Ascending aorta (tissue), 2 donors: ENCODE measurements at regions of chr12 and their contacts with region 1.

Region 1: DNA sequence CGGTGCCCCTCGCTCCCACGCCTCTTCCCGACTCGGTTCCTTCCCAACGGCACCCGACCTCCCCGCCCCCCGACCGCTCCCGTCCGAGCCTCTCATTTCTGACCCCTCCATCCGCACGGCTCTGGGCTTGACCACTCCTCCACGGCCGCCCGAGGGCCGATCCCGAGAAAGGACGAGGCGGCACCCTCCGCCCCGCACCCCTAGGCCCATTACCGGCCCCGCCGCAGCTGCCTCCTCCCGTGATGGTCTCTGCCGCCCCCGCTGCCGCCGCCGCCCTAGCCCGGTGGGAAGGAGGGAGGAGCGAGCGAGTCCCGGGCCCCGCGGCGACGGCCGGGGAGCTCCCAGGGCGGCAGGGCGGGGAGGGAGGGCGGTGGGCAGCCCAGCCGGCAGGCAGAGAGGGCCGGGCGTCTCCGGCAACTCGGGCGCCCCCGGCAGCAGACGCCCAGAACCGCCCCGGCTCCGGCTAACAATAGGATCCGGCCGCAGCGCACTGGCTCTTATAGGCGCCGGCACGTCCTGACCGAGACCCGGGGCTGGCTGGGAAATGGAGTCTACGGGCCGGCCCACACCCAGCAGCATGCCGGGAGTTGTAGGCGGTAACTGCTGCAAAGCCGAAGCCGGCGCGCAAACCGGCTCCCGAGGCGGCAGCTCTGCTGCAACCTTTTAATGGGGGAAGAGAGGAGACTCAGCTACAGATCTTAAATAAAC is at the start of gene CSRNP2:
- DNase-seq: peak; percentile 90 to 98
- H3K4me3 ChIP-seq: peak within 1 kb of the TSS; percentile 91 to 99
- H3K27ac ChIP-seq: peak within 1 kb of the TSS; percentile 95 to 99
- H3K4me1 ChIP-seq: peaks cover 5 to 13% of the 10 kb centered on the region in 2 donors
- H3K27me3 ChIP-seq: no peaks in the 10 kb centered on the region
- CTCF ChIP-seq: no peak
- total RNA-seq, gene CSRNP2: 13.6 TPM

Region 2: DNA sequence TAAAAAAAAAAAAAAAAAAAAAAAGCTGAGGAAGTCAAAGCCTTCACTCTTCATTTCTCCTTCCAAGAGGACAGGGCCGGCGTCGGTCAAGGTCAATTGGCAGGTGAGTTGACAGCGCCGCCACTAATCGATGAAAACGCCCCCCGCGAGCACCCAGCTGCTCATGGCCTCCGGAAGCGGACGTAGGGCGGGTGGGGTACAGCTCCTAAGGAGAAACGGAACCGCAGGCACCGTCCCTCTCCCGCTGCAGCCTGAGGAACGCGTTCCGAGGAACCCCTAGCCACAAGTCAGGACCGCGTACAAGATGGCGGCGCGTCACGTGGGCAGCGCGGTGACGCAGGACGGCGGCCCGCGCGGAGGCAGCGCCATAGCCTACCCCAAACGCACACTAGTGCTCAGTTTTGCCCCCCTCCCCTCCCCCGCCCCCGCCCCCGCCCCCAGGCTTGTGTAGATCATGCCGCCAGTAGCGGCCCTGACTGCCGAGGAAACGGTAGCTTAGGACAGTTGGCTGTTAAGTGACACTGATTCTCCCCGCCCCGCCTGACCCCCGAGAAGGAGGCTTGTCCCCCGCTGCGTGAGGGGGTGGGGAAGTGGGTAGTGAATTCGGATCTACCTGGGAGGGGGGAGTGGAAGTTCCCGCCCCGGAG is 319.5 kb before region 1 on chr12 and contains the start of gene ATF1:
- intact Hi-C with region 1: loop called (anchors 2 kb)
- DNase-seq: peak; percentile 73 to 96
- H3K4me3 ChIP-seq: peak within 1 kb of the TSS; percentile 83 to 94
- H3K27ac ChIP-seq: peak within 1 kb of the TSS; percentile 96 to 98
- H3K4me1 ChIP-seq: peaks cover 0 to 15% of the 10 kb centered on the region in 2 donors
- H3K27me3 ChIP-seq: no peaks in the 10 kb centered on the region
- CTCF ChIP-seq: no peak
- total RNA-seq, gene ATF1: 6.8 TPM

Region 3: DNA sequence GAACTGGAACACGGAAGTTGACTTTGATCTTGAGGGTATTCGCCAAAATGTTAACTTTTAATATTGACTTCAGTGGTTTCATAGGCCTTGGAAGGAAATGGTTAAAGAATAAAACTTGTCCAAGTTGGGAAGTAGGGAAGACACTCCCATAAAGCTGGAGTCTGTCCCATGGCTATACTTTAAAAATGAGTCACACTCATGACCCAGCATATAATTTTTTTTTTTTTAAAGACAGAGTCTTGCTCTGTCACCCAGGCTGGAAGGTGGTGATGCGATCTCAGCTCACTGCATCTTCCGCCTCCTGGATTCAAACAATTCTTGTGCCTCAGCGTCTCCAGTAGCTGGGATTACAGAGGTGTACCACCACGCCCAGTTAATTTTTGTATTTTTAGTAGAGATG is 221.0 kb before region 1 on chr12:
- intact Hi-C with region 1: no loop called
- DNase-seq: no peak
- H3K4me3 ChIP-seq: no peak overlapping the region
- H3K27ac ChIP-seq: no peak overlapping the region
- H3K4me1 ChIP-seq: no peaks in the 10 kb centered on the region
- H3K27me3 ChIP-seq: no peaks in the 10 kb centered on the region
- CTCF ChIP-seq: no peak

Region 4: DNA sequence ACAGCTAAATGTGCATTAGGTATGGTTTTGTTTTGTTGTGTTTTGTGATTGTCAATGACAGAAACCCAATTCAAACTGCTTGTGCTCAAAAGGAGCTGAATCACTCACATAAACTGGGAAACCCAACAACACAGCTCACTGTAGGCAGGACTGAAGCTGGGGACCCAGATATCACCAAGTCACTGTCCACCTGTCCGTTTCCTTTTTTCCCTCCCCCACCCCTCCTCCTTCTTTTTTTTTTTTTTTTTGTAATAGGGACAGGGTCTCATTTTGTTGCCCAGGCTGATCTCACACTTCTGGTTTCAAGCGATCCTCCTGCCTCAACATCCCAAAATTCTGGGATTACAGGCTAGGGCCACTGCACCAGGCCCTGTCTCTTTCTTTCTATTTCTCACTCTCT is 50.2 kb before region 1 on chr12:
- intact Hi-C with region 1: no loop called
- DNase-seq: no peak
- H3K4me3 ChIP-seq: no peak overlapping the region
- H3K27ac ChIP-seq: no peak overlapping the region
- H3K4me1 ChIP-seq: no peaks in the 10 kb centered on the region
- H3K27me3 ChIP-seq: no peaks in the 10 kb centered on the region
- CTCF ChIP-seq: no peak

Region 5: DNA sequence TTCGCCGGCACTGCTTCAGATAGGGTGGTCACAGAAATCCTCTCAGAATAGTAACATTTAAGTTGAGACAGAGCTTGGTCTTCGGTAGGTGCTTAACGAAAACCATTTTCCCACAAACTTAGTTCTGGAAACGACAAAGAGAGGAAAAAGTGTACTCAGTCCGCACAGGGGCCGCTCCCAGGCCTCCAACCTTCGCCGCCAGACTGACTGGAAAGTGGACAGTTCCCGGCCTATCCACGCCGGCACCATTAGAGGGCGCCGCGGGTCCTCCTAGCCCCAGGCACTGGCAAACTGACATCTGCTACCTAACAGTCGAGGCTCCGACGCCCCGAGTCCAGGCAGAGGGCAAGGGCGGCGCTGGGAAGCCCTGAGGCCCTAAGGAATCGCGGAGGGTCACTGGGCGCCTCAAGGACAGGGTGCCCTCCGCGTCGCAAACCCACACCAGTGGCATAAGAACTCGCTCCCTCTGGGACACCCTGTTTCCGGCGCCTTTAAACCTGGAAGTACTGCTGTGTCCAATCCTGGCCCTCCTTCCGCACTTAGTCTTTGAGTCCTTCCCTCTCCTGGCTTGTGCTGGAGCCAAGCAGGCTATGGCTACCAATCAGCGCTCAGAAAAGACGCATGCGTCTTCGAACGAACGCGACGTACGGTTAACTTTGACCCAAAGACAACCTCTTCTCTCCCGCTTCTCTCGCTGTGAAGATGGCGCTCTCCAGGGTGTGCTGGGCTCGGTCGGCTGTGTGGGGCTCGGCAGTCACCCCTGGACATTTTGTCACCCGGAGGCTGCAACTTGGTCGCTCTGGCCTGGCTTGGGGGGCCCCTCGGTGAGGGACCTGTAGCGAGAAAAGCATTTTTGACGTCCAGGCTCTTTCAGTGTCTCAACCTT is 35.4 kb before region 1 on chr12 and contains the start of gene LETMD1:
- intact Hi-C with region 1: loop called (anchors 1 kb)
- DNase-seq: peak; percentile 87 to 97
- H3K4me3 ChIP-seq: peak within 1 kb of the TSS; percentile 93 to 95
- H3K27ac ChIP-seq: peak within 1 kb of the TSS; percentile 94 to 95
- H3K4me1 ChIP-seq: peaks cover 8 to 17% of the 10 kb centered on the region in 2 donors
- H3K27me3 ChIP-seq: no peaks in the 10 kb centered on the region
- CTCF ChIP-seq: peak; percentile 85 to 93 (median 91)
- total RNA-seq, gene LETMD1: 8.6 TPM

Region 6: GRCh38 chr12:51172515-51173431 is 89.5 kb after region 1 on chr12 and contains the start of gene TFCP2:
- intact Hi-C with region 1: loop called (anchors 1 kb)
- DNase-seq: peak; percentile 91 to 98
- H3K4me3 ChIP-seq: peak within 1 kb of the TSS; percentile 85 to 94
- H3K27ac ChIP-seq: peak within 1 kb of the TSS; percentile 91 to 100
- H3K4me1 ChIP-seq: peaks cover 6% of the 10 kb centered on the region in 2 donors
- H3K27me3 ChIP-seq: no peaks in the 10 kb centered on the region
- CTCF ChIP-seq: no peak
- total RNA-seq, gene TFCP2: 3.0 TPM

Region 7: DNA sequence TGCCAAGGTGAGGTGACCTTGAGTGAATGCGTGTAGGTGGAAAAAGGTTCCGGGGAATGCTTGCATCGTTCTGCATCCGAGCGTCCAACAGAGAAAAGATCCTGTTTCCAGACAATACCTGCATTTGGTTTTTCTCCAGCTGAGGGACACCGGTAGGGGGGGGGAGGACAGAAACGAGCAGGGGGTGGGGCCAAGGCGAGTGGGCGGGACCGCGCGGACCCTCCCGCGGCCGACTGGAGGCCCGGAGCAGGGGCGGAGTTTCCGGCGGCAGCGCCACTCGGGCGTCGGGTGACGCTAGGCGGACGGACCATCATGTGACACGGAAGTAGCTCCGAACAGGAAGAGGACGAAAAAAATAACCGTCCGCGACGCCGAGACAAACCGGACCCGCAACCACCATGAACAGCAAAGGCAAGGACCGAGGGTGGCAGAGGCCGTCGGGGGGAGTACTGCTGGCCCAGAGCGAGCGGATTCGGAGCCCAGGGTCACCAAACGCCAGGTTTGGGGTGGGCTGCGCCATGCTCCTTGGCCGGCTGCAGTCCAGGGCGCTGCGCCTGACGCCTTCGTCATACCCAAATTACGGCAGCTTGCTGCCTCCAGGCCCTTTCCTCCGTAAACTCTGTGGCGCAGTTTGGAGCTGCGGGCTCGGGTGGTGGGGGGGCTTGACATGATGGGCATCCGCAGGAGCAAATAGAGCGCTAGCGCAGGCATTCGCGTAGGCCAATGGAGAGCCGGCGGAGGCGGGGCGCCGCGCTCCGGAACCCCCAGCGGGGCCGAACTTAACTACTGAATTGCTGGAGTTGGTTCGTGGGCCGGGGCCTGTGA is 155.4 kb after region 1 on chr12 and contains the start of gene DAZAP2:
- intact Hi-C with region 1: loop called (anchors 2 kb)
- DNase-seq: peak; percentile 85 to 97
- H3K4me3 ChIP-seq: peak within 1 kb of the TSS; percentile 74 to 96
- H3K27ac ChIP-seq: peak within 1 kb of the TSS; percentile 99
- H3K4me1 ChIP-seq: peaks cover 14 to 25% of the 10 kb centered on the region in 2 donors
- H3K27me3 ChIP-seq: no peaks in the 10 kb centered on the region
- CTCF ChIP-seq: no peak
- total RNA-seq, gene DAZAP2: 212 TPM

Region 8: GRCh38 chr12:51863933-51864832 is 780.9 kb after region 1 on chr12:
- intact Hi-C with region 1: no loop called
- DNase-seq: no peak
- H3K4me3 ChIP-seq: peak overlapping the region; percentile 45 to 59
- H3K27ac ChIP-seq: no peak overlapping the region
- H3K4me1 ChIP-seq: peaks cover 10 to 11% of the 10 kb centered on the region in 2 donors
- H3K27me3 ChIP-seq: peaks cover 5% of the 10 kb centered on the region
- CTCF ChIP-seq: no peak